H1 (cell line): ENCODE measurements at regions of chr4 and their contacts with region 1.

Region 1: GRCh38 chr4:77095101-77095821 is 19.5 kb upstream of the CCNI start:
- DNase-seq: peak; percentile 38 to 79
- H3K4me3 ChIP-seq: no peak overlapping the region
- H3K27ac ChIP-seq: no peak overlapping the region
- H3K4me1 ChIP-seq: no peaks in the 10 kb centered on the region
- H3K27me3 ChIP-seq: no peaks in the 10 kb centered on the region
- CTCF ChIP-seq: peak; percentile 70 to 94 (median 76)
- EP300 ChIP-seq: no peak
- POLR2A ChIP-seq: no peak
- RAD21 ChIP-seq: peak; percentile 75 to 80

Region 2: GRCh38 chr4:77082886-77083608 is 12.2 kb before region 1 on chr4:
- CTCF ChIA-PET with region 1: interaction called, 73 read pairs
- POLR2A ChIA-PET with region 1: interaction called, 6 read pairs
- DNase-seq: no peak
- H3K4me3 ChIP-seq: no peak overlapping the region
- H3K27ac ChIP-seq: no peak overlapping the region
- H3K4me1 ChIP-seq: no peaks in the 10 kb centered on the region
- H3K27me3 ChIP-seq: no peaks in the 10 kb centered on the region
- CTCF ChIP-seq: peak; percentile 16 to 38 (median 25); a peak in 3 of 4 replicates
- EP300 ChIP-seq: no peak
- POLR2A ChIP-seq: no peak
- RAD21 ChIP-seq: no peak

Region 3: GRCh38 chr4:77126809-77127208 is 31.5 kb after region 1 on chr4:
- CTCF ChIA-PET with region 1: interaction called, 17 read pairs
- POLR2A ChIA-PET with region 1: no interaction called
- DNase-seq: no peak
- H3K4me3 ChIP-seq: no peak overlapping the region
- H3K27ac ChIP-seq: no peak overlapping the region
- H3K4me1 ChIP-seq: peaks cover 0 to 3% (median 0%) of the 10 kb centered on the region in 4 experiments; a peak in 3 of 7 replicates
- H3K27me3 ChIP-seq: no peaks in the 10 kb centered on the region
- CTCF ChIP-seq: no peak
- EP300 ChIP-seq: no peak
- POLR2A ChIP-seq: no peak
- RAD21 ChIP-seq: no peak

Region 4: DNA sequence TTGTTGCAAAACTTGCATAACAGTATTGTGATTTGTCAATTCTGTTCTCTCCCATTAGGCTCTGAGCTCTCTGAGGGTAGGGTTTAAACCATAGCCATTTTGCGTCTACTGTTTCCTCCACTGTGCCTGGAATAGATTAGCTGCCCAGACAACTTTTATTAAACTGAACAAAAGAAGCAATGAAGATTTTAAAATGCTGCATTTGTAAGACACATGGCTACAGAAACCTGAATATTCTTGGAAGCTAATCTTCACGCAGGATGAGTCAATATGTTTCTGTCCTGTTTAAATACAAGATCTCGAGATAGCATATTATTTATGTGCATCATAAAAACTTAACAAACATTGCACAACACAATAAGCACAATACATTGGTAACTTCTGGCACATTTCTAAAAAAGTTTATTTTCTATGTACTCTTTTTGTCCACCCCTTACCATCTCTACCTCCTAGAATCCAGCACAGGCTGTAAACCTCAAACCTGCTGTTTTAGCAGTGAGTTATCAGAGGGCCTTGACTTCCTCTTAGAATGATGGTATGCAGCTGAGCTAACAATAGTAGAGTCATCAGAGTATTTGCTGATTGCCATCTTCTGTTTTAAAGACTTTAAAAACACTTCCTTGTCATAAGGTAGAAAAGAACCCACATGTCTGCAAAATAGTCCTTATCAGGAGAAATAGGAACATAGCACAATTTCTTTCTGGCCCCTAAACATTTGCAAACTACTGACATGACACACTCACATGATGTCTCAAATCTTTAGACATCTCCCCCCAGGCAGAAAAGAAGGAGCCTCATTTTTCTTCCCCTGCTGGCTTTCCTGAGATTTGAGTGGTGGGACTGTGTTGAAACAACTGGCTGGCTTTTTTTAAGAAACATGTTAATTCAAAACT is 51.2 kb after region 1 on chr4:
- CTCF ChIA-PET with region 1: interaction called, 10 read pairs
- POLR2A ChIA-PET with region 1: no interaction called
- DNase-seq: no peak
- H3K4me3 ChIP-seq: no peak overlapping the region
- H3K27ac ChIP-seq: no peak overlapping the region
- H3K4me1 ChIP-seq: no peaks in the 10 kb centered on the region
- H3K27me3 ChIP-seq: no peaks in the 10 kb centered on the region
- CTCF ChIP-seq: no peak
- EP300 ChIP-seq: no peak
- POLR2A ChIP-seq: no peak
- RAD21 ChIP-seq: no peak

Region 5: GRCh38 chr4:77193511-77194102 is 98.3 kb after region 1 on chr4:
- CTCF ChIA-PET with region 1: interaction called, 24 read pairs
- POLR2A ChIA-PET with region 1: no interaction called
- DNase-seq: peak in 1 of 2 experiments; percentile 80
- H3K4me3 ChIP-seq: peak overlapping the region in 1 of 4 experiments; percentile 37; a peak in 1 of 8 replicates
- H3K27ac ChIP-seq: no peak overlapping the region
- H3K4me1 ChIP-seq: peaks cover 0 to 4% (median 0%) of the 10 kb centered on the region in 4 experiments; a peak in 1 of 7 replicates
- H3K27me3 ChIP-seq: peaks cover 0 to 6% (median 1%) of the 10 kb centered on the region in 4 experiments; a peak in 3 of 7 replicates
- CTCF ChIP-seq: no peak
- EP300 ChIP-seq: no peak
- POLR2A ChIP-seq: no peak
- RAD21 ChIP-seq: no peak

Region 6: GRCh38 chr4:77263247-77263646 is 168.0 kb after region 1 on chr4:
- CTCF ChIA-PET with region 1: no interaction called
- POLR2A ChIA-PET with region 1: no interaction called
- DNase-seq: no peak
- H3K4me3 ChIP-seq: no peak overlapping the region
- H3K27ac ChIP-seq: no peak overlapping the region
- H3K4me1 ChIP-seq: no peaks in the 10 kb centered on the region
- H3K27me3 ChIP-seq: 0 out of 7 replicates have a peak, but pooled peaks cover 0 to 2% (median 0%) of the 10 kb centered on the region in 4 experiments
- CTCF ChIP-seq: no peak
- EP300 ChIP-seq: no peak
- POLR2A ChIP-seq: no peak
- RAD21 ChIP-seq: no peak

Region 7: GRCh38 chr4:77288886-77289285 is 193.6 kb after region 1 on chr4:
- CTCF ChIA-PET with region 1: no interaction called
- POLR2A ChIA-PET with region 1: no interaction called
- DNase-seq: no peak
- H3K4me3 ChIP-seq: no peak overlapping the region
- H3K27ac ChIP-seq: no peak overlapping the region
- H3K4me1 ChIP-seq: no peaks in the 10 kb centered on the region
- H3K27me3 ChIP-seq: no peaks in the 10 kb centered on the region
- CTCF ChIP-seq: no peak
- EP300 ChIP-seq: no peak
- POLR2A ChIP-seq: no peak
- RAD21 ChIP-seq: no peak

Region 8: GRCh38 chr4:77344784-77345183 is 249.5 kb after region 1 on chr4:
- CTCF ChIA-PET with region 1: no interaction called
- POLR2A ChIA-PET with region 1: no interaction called
- DNase-seq: no peak
- H3K4me3 ChIP-seq: no peak overlapping the region
- H3K27ac ChIP-seq: no peak overlapping the region
- H3K4me1 ChIP-seq: peaks cover 0 to 6% (median 1%) of the 10 kb centered on the region in 4 experiments; a peak in 1 of 7 replicates
- H3K27me3 ChIP-seq: no peaks in the 10 kb centered on the region
- CTCF ChIP-seq: no peak
- EP300 ChIP-seq: no peak
- POLR2A ChIP-seq: no peak
- RAD21 ChIP-seq: no peak